Breast epithelium (tissue), 4 donors: ENCODE measurements at regions of chr13 and their contacts with region 1.

Region 1: DNA sequence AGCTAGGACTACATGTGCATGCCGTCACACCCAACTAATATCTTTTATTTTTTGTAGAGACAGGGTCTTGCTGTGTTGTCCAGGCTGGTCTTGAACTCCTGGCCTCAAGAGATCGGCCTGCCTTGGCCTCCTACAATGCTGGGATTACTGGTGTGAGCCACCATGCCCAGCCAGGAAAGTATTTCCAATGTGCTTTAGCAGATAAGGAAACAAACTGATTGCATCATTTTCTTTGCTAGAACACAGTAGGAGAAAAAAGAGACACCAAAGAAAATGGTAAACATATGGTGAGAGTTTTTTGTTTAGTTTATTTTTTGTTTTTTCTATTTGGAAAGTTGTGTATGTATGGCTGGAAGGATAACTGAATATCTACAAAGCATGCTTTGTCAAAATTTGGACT is 46.9 kb upstream of the AKAP11 start:
- DNase-seq: no peak
- H3K4me3 ChIP-seq: no peak overlapping the region
- H3K27ac ChIP-seq: no peak overlapping the region
- H3K4me1 ChIP-seq: no peaks in the 10 kb centered on the region
- H3K27me3 ChIP-seq: no peaks in the 10 kb centered on the region
- CTCF ChIP-seq: no peak
- POLR2A ChIP-seq: no peak

Region 2: DNA sequence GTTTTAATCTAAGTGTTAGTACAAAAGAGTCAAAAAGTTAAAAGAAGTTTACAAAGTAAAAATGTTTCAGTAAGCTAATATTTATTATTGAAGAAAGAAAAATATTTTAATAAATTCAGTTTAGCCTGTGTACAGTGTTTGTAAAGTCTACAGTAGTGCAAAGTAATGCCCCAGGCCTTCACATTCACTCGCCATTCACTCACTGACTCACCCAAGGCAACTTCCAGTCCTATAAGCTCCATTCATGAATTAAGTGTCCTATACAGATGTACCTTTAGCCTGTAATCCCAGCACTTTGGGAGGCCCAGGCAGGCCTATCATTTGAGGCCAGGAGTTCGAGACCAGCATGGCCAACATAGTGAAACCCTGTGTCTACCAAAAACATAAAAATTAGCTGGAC is 22.8 kb after region 1 on chr13:
- intact Hi-C with region 1: loop called (anchors 2 kb)
- DNase-seq: no peak
- H3K4me3 ChIP-seq: no peak overlapping the region
- H3K27ac ChIP-seq: no peak overlapping the region
- H3K4me1 ChIP-seq: no peaks in the 10 kb centered on the region
- H3K27me3 ChIP-seq: no peaks in the 10 kb centered on the region
- CTCF ChIP-seq: no peak
- POLR2A ChIP-seq: no peak

Region 3: GRCh38 chr13:43648733-43649132 is 1423.7 kb after region 1 on chr13:
- intact Hi-C with region 1: no loop called
- DNase-seq: no peak
- H3K4me3 ChIP-seq: no peak overlapping the region
- H3K27ac ChIP-seq: no peak overlapping the region
- H3K4me1 ChIP-seq: no peaks in the 10 kb centered on the region
- H3K27me3 ChIP-seq: no peaks in the 10 kb centered on the region
- CTCF ChIP-seq: no peak
- POLR2A ChIP-seq: no peak